ENCODE measurements at regions of chr21 and their contacts with region 1.

Region 1: DNA sequence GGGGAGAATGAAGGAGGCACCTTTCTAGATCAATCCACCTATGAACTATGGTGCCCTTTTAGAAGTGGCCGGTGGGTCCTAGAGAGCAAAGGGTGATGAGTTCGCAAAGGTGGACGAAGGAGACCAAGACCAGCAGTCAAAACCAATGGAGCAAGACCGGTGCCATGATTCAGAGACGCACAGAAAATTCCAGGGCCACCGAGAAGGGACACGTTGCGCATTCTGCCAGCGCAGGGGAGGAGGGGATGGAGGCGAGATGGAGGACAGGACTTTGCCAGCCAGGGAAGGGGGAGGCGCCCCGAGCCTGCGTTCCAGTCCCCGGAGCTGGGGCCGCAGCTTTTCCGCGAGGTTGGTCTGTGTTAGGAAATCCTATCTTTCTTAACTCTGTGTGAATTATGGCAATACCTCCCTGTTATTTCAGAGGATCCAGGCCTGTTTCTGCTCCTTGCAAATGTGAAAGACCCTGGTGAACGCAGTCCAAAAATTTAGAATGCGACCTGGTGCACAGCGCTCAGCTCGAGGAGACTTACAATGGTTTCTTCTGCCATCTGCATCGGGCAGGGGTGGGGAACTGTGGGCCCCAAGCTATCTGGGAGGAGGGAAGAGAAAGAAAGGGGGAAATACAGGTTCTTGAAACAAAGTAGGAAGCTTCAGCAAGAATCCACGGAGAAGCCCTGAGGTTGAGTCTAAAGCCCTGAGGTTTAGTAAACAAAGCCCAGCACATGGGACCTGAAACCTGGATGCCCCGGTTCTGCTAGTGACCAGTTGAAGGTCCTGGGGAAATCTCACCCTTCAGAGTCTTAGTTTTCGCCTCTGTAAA is 129.4 kb downstream of the MRPS6 start:
- DNase-seq: no peak
- H3K4me3 ChIP-seq: peak overlapping the region in 1 of 2 donors; percentile 49
- H3K27ac ChIP-seq: peak overlapping the region; percentile 61 to 70
- H3K4me1 ChIP-seq: no peaks in the 10 kb centered on the region
- H3K27me3 ChIP-seq: no peaks in the 10 kb centered on the region
- CTCF ChIP-seq: no peak
- POLR2A ChIP-seq: no peak

Region 2: DNA sequence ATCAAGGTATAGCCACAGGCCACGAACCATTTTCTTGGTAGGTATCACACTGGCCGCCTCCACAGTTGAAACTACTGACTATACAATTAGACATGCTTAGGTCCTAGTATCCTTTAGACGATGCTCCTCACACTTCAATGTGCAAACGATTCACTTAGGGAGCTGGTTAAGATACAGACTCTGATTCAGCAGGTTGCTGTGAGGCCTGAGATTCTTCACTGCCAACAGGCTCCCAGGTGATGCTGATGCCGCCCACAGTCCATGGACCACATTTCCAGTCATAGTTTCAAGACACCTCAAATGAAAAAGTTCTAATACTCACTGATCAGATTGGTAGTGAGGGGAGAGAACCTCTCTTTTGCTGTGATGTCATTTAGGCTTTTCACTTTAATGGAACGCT is 294.0 kb before region 1 on chr21:
- intact Hi-C with region 1: no loop called
- DNase-seq: no peak
- H3K4me3 ChIP-seq: no peak overlapping the region
- H3K27ac ChIP-seq: no peak overlapping the region
- H3K4me1 ChIP-seq: no peaks in the 10 kb centered on the region
- H3K27me3 ChIP-seq: no peaks in the 10 kb centered on the region
- CTCF ChIP-seq: no peak
- POLR2A ChIP-seq: no peak

Region 3: GRCh38 chr21:33947451-33948095 is 255.2 kb before region 1 on chr21:
- intact Hi-C with region 1: loop called (anchors 5 kb)
- DNase-seq: peak; percentile 89
- H3K4me3 ChIP-seq: peak overlapping the region in 1 of 2 donors; percentile 12
- H3K27ac ChIP-seq: peak overlapping the region; percentile 71 to 80
- H3K4me1 ChIP-seq: peaks cover 5% of the 10 kb centered on the region
- H3K27me3 ChIP-seq: no peaks in the 10 kb centered on the region
- CTCF ChIP-seq: no peak
- POLR2A ChIP-seq: no peak

Region 4: DNA sequence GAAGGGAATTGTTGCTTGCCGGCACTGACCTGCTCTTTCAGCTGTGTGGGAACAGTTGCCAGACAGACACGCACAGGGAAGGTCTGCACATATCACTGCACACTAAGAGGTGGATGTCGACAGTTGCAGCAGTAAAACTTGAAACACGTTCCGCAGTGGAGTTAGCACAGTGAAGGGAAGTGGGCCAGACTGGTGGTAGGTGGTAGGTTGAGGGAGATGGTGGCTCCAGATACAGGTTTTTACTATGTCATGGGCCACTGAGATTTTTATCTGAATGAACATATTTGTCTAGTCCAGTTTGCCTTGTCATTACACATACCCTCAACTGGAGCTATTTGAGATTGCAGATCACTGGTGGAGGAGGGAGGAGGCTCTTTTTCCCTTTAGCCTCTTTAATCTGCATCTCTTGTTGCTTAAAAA is 115.9 kb before region 1 on chr21:
- intact Hi-C with region 1: no loop called
- DNase-seq: no peak
- H3K4me3 ChIP-seq: no peak overlapping the region
- H3K27ac ChIP-seq: no peak overlapping the region
- H3K4me1 ChIP-seq: peaks cover 4% of the 10 kb centered on the region
- H3K27me3 ChIP-seq: no peaks in the 10 kb centered on the region
- CTCF ChIP-seq: no peak
- POLR2A ChIP-seq: no peak

Region 5: DNA sequence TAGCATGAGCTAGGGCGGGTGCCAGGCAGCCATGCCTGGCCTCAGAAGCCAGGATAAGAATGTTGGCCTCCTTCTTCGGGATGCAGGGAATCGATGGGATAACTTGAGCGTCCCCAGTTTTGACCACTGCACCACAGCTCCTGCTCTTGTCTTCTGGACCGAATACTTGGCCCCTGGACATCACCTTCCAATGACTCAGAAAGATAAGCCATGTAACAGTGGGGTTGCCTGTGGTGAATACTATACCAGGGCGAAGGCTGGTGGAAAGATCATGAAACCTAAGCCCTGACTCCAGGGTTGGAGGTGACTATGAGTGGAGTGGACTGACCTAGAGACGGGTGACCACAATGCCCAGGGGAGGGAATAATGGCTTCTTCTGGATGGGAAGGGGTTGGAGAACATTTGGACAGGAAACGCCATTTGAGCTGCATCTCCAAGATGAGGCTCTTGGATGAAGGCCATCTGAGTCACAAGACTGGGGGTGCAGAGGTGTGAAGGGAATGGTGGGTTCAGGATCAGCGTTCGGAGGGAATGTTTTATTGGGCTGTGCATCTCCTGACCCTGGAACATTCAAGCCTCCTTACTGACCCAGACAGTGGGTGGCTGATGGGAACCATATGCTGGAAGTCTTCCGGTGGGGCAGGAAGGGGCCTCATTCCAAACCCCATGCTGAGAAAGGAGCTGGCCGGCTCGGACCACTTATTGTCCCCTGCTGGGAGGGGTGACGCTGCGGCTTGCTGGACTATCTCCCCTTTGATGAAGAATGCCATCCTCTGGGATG is 142.5 kb after region 1 on chr21:
- intact Hi-C with region 1: loop called (anchors 5 kb)
- DNase-seq: no peak
- H3K4me3 ChIP-seq: no peak overlapping the region
- H3K27ac ChIP-seq: peak overlapping the region; percentile 56 to 69
- H3K4me1 ChIP-seq: no peaks in the 10 kb centered on the region
- H3K27me3 ChIP-seq: no peaks in the 10 kb centered on the region
- CTCF ChIP-seq: no peak
- POLR2A ChIP-seq: no peak

Measured in prostate gland (tissue), 2 donors.